Activated CD4-positive, alpha-beta T cell treated with anti-CD3 and anti-CD28 coated beads, Interleukin-2, amount 10 ng/mL, durations not matched to agents 24 days and 14 days (primary cell): ENCODE measurements at regions of chr3 and their contacts with region 1.

Region 1: GRCh38 chr3:15064835-15065549 is at the start of gene MRPS25:
- DNase-seq: peak; percentile 97
- H3K4me3 Mint-ChIP-seq: peak within 1 kb of the TSS; percentile 98
- H3K27ac Mint-ChIP-seq: peak within 1 kb of the TSS; percentile 97
- H3K4me1 Mint-ChIP-seq: peaks cover 15% of the 10 kb centered on the region
- H3K27me3 Mint-ChIP-seq: no peaks in the 10 kb centered on the region
- total RNA-seq, gene MRPS25: 103 and 114 TPM in 2 replicates

Region 2: DNA sequence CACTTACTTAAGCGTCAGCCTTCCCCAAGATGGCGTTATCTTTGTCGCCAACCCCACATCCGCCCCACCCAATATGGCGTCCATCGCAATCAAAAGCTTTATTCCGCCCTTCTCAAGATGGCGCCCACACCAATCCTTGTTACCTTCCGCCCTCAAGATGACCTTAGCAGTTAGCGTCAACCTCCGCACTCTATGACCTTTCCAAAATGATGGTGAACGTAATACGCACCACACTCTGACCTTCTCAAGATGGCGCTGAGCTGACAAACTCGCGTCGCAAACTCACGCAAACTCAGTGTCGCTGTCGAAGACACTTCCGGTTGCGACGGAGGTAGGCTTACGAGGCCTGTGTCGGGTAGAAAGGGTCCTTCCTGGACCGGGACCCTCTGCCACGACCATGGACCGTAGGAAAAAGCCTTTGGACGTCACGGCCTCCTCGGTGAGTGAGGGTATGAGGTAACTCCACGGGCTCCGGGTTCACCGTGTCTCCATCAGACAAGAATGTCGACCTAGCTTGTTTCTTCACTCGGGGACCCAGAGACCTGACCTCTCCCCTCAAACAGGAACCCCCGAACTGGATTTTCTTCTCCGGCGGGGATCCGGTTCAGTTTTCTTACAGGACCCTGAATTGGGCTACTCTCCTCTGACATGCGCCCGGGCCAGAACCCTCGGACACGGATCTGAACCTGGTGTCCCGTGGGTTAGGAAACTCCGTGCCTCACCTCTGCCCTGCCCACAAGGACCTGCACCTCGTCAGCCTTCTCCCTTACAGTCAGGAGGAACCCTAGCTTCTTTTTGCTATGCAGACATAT is 413.3 kb before region 1 on chr3 and contains the start of gene CCDC174:
- intact Hi-C with region 1: loop called (anchors 10 kb)
- DNase-seq: peak; percentile 99
- H3K4me3 Mint-ChIP-seq: peak within 1 kb of the TSS; percentile 100
- H3K27ac Mint-ChIP-seq: peak within 1 kb of the TSS; percentile 95
- H3K4me1 Mint-ChIP-seq: peaks cover 38% of the 10 kb centered on the region
- H3K27me3 Mint-ChIP-seq: peaks cover 3% of the 10 kb centered on the region
- total RNA-seq, gene CCDC174: 16.0 and 16.8 TPM in 2 replicates

Region 3: DNA sequence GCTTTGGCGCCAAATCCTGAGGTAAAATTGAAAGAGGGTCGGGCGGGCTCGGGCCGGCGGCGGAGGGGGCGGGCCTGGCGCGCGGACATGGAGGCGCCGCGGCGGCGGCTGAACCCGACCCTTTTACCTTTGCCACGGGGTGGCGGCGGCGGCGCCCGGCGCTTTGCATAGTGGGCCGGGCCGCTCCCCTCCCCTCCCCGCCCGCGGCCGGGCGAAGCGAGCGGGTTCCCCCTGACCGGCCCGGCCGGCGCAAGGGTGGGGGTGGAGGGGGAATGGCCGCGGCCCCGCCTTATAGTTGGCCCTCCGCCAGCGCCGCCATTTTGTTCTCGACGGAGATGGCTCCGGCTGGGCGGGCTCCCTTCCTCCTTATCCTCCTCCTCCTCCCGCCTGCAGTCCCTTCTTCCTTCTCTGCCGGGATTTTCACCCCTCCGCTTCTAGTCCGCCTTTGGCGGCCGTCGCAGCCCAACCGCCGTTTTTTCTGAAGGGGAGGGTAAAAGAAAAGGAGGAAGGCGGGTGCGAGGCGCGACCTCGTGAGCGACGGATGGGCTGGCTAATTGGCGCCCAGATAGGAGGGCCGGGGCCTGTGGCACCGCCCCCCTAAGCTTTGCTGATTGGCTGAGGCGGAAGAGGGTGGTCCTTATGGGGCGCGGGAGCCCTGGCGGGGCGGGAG is 117.0 kb before region 1 on chr3:
- intact Hi-C with region 1: loop called (anchors 1 kb)
- DNase-seq: peak; percentile 99
- H3K4me3 Mint-ChIP-seq: peak overlapping the region; percentile 100
- H3K27ac Mint-ChIP-seq: peak overlapping the region; percentile 100
- H3K4me1 Mint-ChIP-seq: peaks cover 32% of the 10 kb centered on the region
- H3K27me3 Mint-ChIP-seq: no peaks in the 10 kb centered on the region

Region 4: GRCh38 chr3:15051531-15051930 is 13.5 kb before region 1 on chr3:
- intact Hi-C with region 1: loop called (anchors 1 kb)
- DNase-seq: peak; percentile 82
- H3K4me3 Mint-ChIP-seq: no peak overlapping the region
- H3K27ac Mint-ChIP-seq: no peak overlapping the region
- H3K4me1 Mint-ChIP-seq: peaks cover 21% of the 10 kb centered on the region
- H3K27me3 Mint-ChIP-seq: no peaks in the 10 kb centered on the region

Region 5: GRCh38 chr3:15098503-15099363 is 33.7 kb after region 1 on chr3 and contains the start of gene RBSN:
- intact Hi-C with region 1: loop called (anchors 1 kb)
- DNase-seq: peak; percentile 99
- H3K4me3 Mint-ChIP-seq: peak within 1 kb of the TSS; percentile 90
- H3K27ac Mint-ChIP-seq: peak within 1 kb of the TSS; percentile 93
- H3K4me1 Mint-ChIP-seq: peaks cover 29% of the 10 kb centered on the region
- H3K27me3 Mint-ChIP-seq: no peaks in the 10 kb centered on the region
- total RNA-seq, gene RBSN: 13.2 and 15.0 TPM in 2 replicates

Region 6: DNA sequence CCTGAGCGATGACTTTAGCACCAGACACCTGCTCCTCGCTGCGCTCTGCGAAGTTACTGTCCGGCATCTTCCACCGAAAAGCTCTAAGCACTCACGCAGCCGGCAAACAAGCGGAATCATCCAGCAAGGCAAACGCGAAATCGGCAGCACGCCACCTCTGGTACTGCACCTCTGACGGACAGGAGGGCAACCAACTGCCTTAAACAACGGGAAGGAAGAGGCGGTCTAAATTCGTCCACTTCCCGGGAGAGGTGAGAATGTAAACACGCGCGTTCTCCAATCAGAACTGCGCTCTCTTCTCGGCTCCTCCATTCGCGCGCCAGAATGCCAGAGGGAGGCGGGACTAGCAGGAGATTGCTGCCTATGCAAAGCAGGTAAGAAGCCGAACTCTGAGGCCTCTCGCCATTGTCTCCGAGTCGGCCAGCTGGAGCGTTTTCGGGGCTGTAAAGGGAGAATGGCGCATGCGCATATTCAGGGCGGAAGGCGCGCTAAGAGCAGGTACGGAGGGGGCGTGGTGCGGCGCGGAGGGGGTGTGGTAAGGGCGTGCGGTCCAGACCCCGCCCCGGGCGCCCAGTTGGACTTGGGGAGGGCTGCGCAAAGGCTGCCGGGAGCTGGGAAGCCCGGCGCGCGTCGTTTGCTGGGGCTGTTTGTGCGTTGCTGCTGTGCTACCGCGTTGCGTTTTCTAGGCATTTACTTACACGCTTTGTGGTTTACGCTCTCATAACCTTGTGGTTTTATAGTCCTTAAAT is 536.6 kb after region 1 on chr3 and contains the starts of genes BTD and HACL1:
- intact Hi-C with region 1: loop called (anchors 2 kb)
- DNase-seq: peak; percentile 99
- H3K4me3 Mint-ChIP-seq: peak within 1 kb of the TSS; percentile 98
- H3K27ac Mint-ChIP-seq: peak within 1 kb of the TSS; percentile 98
- H3K4me1 Mint-ChIP-seq: peaks cover 30% of the 10 kb centered on the region
- H3K27me3 Mint-ChIP-seq: peaks cover 2% of the 10 kb centered on the region
- total RNA-seq, gene BTD: 2.0 and 2.1 TPM in 2 replicates
- total RNA-seq, gene HACL1: 19.3 and 21.4 TPM in 2 replicates